Mammary epithelial cell (primary cell): ENCODE measurements at regions of chr5 and their contacts with region 1.

Region 1: DNA sequence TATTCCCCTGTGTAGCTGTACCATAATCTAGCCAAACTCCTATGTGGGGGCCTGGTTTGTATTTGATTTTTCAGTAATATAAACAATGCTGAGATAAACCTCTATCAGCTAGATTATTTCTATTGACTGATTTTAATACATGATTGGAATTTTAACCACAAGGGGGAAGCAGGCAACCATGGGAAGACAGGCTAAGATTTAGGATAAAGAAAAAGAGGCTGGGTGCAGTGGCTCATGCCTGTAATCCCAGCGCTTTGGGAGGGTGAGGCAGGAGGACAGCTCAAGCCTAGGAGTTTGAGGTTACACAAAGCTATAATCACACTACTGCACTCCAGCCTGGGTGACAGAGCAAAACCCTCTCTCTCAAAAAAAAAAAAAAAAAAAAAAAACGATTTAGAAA is 18.1 kb upstream of the GPX3 start:
- DNase-seq: peak; percentile 36
- H3K4me3 ChIP-seq: no peak overlapping the region
- H3K27ac ChIP-seq: no peak overlapping the region
- H3K4me1 ChIP-seq: no peaks in the 10 kb centered on the region
- H3K27me3 ChIP-seq: no peaks in the 10 kb centered on the region
- CTCF ChIP-seq: peak; percentile 29 to 63

Region 2: GRCh38 chr5:150879358-150879757 is 122.9 kb before region 1 on chr5:
- CTCF ChIA-PET with region 1: no interaction called
- dilution Hi-C with region 1: no loop called
- in situ Hi-C with region 1: no loop called
- intact Hi-C with region 1: no loop called
- DNase-seq: no peak
- H3K4me3 ChIP-seq: no peak overlapping the region
- H3K27ac ChIP-seq: no peak overlapping the region
- H3K4me1 ChIP-seq: no peaks in the 10 kb centered on the region
- H3K27me3 ChIP-seq: no peaks in the 10 kb centered on the region
- CTCF ChIP-seq: no peak

Region 3: DNA sequence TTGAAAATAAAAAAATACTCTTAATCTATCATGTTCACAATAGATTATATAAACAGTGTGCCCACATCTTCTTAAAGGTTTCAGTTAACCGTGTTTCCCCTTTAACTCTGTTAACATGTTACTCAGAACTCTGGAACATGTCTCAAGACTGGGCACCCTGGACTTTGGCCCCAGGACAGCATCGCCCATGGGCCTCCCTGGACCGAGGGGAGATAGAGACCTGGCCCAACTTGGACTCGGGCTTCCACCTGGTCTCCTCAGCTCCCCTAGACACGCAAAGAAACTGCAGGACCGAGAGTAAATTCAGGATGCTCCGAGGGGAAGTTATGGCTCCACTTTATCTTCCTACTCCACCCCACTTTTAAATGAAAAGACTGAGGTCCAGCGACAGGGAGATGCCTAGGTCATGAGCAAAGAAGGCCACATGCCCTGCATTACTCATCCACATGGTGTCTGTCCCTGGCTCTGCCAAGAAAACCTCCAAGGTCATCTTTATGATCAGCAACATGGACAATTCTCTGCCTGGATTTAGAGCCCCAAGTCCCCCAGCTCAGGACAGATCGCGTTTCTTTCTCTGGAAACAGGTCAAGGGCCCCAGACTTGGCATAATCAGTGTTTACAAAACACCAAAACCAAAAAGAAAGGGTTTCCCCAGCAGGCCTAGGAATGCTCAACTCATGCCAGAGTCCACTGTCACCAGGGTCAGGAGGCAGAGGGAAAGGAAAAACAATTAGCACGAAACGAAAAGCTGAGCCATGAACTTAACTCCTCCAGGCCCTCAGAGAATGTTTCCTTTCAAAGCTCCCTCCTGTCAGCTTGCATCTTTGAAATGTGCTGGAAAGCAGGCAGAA is 35.5 kb after region 1 on chr5:
- CTCF ChIA-PET with region 1: no interaction called
- dilution Hi-C with region 1: loop called (anchors 5 kb)
- in situ Hi-C with region 1: no loop called
- intact Hi-C with region 1: loop called (anchors 2 kb)
- DNase-seq: no peak
- H3K4me3 ChIP-seq: no peak overlapping the region
- H3K27ac ChIP-seq: no peak overlapping the region
- H3K4me1 ChIP-seq: peaks cover 49% of the 10 kb centered on the region
- H3K27me3 ChIP-seq: no peaks in the 10 kb centered on the region
- CTCF ChIP-seq: no peak

Region 4: GRCh38 chr5:151051066-151051930 is 49.0 kb after region 1 on chr5:
- CTCF ChIA-PET with region 1: interaction called, 30 read pairs
- dilution Hi-C with region 1: no loop called
- in situ Hi-C with region 1: no loop called
- intact Hi-C with region 1: loop called (anchors 1 kb)
- DNase-seq: peak; percentile 51
- H3K4me3 ChIP-seq: no peak overlapping the region
- H3K27ac ChIP-seq: no peak overlapping the region
- H3K4me1 ChIP-seq: no peaks in the 10 kb centered on the region
- H3K27me3 ChIP-seq: no peaks in the 10 kb centered on the region
- CTCF ChIP-seq: peak; percentile 83 to 85

Region 5: GRCh38 chr5:151115274-151115905 is 113.1 kb after region 1 on chr5:
- CTCF ChIA-PET with region 1: interaction called, 10 read pairs
- dilution Hi-C with region 1: no loop called
- in situ Hi-C with region 1: no loop called
- intact Hi-C with region 1: loop called (anchors 1 kb)
- DNase-seq: peak; percentile 32
- H3K4me3 ChIP-seq: no peak overlapping the region
- H3K27ac ChIP-seq: no peak overlapping the region
- H3K4me1 ChIP-seq: no peaks in the 10 kb centered on the region
- H3K27me3 ChIP-seq: no peaks in the 10 kb centered on the region
- CTCF ChIP-seq: peak; percentile 99

Region 6: GRCh38 chr5:151157426-151158286 is 155.4 kb after region 1 on chr5 and contains the start of gene ANXA6:
- CTCF ChIA-PET with region 1: no interaction called
- dilution Hi-C with region 1: no loop called
- in situ Hi-C with region 1: no loop called
- intact Hi-C with region 1: loop called (anchors 2 kb)
- DNase-seq: peak; percentile 59
- H3K4me3 ChIP-seq: peak within 1 kb of the TSS; percentile 36 to 63 (median 61)
- H3K27ac ChIP-seq: no peak within 1 kb of the TSS
- H3K4me1 ChIP-seq: peaks cover 16% of the 10 kb centered on the region
- H3K27me3 ChIP-seq: no peaks in the 10 kb centered on the region
- CTCF ChIP-seq: no peak
- total RNA-seq, gene ANXA6: 9.6 to 32.5 TPM

Region 7: GRCh38 chr5:151164686-151165392 is 162.6 kb after region 1 on chr5:
- CTCF ChIA-PET with region 1: interaction called, 3 read pairs
- dilution Hi-C with region 1: no loop called
- in situ Hi-C with region 1: no loop called
- intact Hi-C with region 1: loop called (anchors 1 kb)
- DNase-seq: peak; percentile 60
- H3K4me3 ChIP-seq: no peak overlapping the region
- H3K27ac ChIP-seq: no peak overlapping the region
- H3K4me1 ChIP-seq: no peaks in the 10 kb centered on the region
- H3K27me3 ChIP-seq: peaks cover 3% of the 10 kb centered on the region
- CTCF ChIP-seq: peak; percentile 96

Region 8: DNA sequence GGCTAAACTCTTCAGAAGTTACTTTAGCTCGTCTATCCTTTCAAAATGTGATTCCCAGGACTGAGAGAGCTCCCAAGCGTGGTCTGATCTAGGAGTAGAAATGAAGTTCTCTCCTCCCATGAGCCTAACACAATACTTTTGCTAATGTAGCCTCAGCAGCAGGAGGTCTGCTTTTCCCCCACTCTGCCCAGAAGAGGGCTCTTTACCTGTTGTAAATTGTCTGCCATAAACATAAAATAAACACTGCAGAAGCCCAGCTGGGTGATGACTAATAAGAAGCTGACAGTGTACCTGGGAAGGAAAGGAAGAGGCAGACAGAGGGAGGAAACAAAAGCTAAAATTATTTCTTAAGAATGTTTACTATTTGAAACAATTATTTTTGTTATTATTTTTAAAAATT is 285.9 kb after region 1 on chr5:
- CTCF ChIA-PET with region 1: no interaction called
- dilution Hi-C with region 1: no loop called
- in situ Hi-C with region 1: no loop called
- intact Hi-C with region 1: no loop called
- DNase-seq: peak; percentile 59
- H3K4me3 ChIP-seq: no peak overlapping the region
- H3K27ac ChIP-seq: no peak overlapping the region
- H3K4me1 ChIP-seq: no peaks in the 10 kb centered on the region
- H3K27me3 ChIP-seq: no peaks in the 10 kb centered on the region
- CTCF ChIP-seq: peak; percentile 23 to 30